ENCODE measurements at regions of chr10 and their contacts with region 1.

Region 1: DNA sequence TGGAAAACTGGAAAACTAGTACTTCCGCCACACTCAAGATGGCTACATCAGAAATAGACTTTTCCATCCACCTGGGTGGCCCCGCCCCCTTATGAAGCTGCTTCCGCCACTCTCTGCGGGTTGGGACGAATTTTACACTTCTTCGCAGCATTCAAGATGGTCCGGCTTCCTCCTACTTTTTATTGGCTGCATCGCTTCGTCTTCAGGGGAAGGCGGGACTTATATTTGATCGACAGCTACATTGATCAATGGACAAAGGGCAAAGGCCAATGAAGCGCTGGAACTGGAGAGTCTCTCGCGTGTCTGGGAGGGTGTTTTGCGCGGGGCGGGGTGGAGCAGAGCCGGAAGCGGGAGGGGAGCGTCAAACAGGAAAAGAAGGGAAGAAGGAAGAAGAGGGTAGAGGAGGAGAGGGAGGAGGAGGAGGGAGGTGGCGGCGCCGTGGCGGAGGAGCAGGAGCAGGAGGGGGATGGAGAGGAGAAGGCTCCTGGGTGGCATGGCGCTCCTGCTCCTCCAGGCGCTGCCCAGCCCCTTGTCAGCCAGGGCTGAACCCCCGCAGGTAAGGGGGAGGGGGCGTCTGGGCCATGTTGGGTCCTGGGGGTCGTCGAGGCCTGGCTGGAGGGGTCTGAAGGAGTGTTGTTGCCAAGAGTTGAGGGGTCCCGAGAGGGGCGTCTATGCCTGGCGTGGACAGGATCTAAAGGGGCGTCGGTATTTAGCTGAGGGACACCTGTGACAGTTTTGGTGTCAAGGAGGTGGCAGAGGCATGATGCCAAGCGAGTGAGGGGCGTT is at the start of gene WBP1L:
- DNase-seq: peak; percentile 96
- ATAC-seq: peak; percentile 98
- total RNA-seq, gene WBP1L: 22.4 TPM

Region 2: GRCh38 chr10:102796407-102797176 is 52.8 kb after region 1 on chr10:
- intact Hi-C with region 1: loop called (anchors 10 kb)
- DNase-seq: peak; percentile 92
- ATAC-seq: peak; percentile 95

Measured in left ventricle myocardium superior (tissue), 1 donor.